CD4-positive, alpha-beta memory T cell (primary cell): ENCODE measurements at regions of chr3 and their contacts with region 1.

Region 1: DNA sequence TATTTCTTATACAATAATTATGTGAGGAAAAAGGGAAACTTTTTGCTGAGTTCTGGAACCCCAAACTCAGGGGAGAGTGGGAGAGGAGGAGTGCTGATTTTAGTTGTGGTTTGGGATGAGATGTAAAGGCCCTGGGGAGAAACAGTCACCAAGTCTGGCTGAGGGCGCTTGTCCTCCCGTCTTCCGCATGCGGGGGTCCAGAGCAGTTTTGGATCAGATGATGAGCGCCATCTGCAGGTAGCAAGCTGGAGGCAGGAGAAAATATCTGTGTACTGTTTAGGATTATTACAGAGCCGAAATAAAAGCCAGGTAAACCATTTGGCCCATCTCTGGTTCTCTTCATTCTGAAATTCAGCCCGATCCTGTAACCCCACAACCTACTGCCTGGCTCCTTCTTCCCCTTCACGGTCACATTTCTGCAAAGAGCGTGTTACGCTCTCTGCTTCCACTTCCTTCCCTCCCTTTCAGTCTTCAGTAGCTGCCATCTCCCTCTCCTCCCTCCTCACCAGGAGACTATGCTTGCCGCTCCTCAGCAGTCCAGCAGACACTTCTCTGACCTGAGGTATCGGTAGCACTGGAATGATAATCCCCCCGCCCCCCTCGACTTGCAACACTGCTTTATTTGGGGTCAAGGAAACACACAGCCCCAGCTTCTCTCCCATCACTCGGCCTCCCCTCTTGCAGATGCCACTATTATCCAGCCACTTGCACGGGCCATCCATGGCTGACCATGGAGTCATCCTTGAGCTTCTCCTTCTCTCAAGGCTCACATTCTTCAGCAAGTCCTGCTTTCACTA is 1.4 kb upstream of the PARP14 start:
- DNase-seq: peak; percentile 79 to 86 (median 79)
- H3K4me3 ChIP-seq: peak overlapping the region; percentile 81 to 89
- H3K4me3 Mint-ChIP-seq: peak overlapping the region; percentile 84 to 98 (median 96)
- H3K27ac ChIP-seq: peak overlapping the region; percentile 96
- H3K27ac Mint-ChIP-seq: peak overlapping the region; percentile 85 to 98 (median 97)
- H3K4me1 ChIP-seq: peaks cover 45% of the 10 kb centered on the region
- H3K4me1 Mint-ChIP-seq: peaks cover 38 to 61% (median 51%) of the 10 kb centered on the region in 4 donors
- H3K27me3 ChIP-seq: no peaks in the 10 kb centered on the region
- H3K27me3 Mint-ChIP-seq: no peaks in the 10 kb centered on the region

Region 2: GRCh38 chr3:121545574-121546455 is 1133.5 kb before region 1 on chr3 and contains the start of gene POLQ:
- CTCF ChIA-PET with region 1: interaction called, 16 read pairs
- POLR2A ChIA-PET with region 1: no interaction called
- intact Hi-C with region 1: loop called (anchors 1 kb)
- DNase-seq: peak; percentile 84 to 92 (median 88)
- H3K4me3 ChIP-seq: peak within 1 kb of the TSS; percentile 90 to 99
- H3K4me3 Mint-ChIP-seq: peak within 1 kb of the TSS; percentile 89 to 95 (median 92)
- H3K27ac ChIP-seq: peak within 1 kb of the TSS; percentile 64
- H3K27ac Mint-ChIP-seq: peak within 1 kb of the TSS; percentile 89 to 96 (median 92)
- H3K4me1 ChIP-seq: peaks cover 10% of the 10 kb centered on the region
- H3K4me1 Mint-ChIP-seq: peaks cover 6 to 11% (median 10%) of the 10 kb centered on the region in 4 donors
- H3K27me3 ChIP-seq: no peaks in the 10 kb centered on the region
- H3K27me3 Mint-ChIP-seq: no peaks in the 10 kb centered on the region
- total RNA-seq, gene POLQ: 0.28 to 0.35 TPM

Region 3: DNA sequence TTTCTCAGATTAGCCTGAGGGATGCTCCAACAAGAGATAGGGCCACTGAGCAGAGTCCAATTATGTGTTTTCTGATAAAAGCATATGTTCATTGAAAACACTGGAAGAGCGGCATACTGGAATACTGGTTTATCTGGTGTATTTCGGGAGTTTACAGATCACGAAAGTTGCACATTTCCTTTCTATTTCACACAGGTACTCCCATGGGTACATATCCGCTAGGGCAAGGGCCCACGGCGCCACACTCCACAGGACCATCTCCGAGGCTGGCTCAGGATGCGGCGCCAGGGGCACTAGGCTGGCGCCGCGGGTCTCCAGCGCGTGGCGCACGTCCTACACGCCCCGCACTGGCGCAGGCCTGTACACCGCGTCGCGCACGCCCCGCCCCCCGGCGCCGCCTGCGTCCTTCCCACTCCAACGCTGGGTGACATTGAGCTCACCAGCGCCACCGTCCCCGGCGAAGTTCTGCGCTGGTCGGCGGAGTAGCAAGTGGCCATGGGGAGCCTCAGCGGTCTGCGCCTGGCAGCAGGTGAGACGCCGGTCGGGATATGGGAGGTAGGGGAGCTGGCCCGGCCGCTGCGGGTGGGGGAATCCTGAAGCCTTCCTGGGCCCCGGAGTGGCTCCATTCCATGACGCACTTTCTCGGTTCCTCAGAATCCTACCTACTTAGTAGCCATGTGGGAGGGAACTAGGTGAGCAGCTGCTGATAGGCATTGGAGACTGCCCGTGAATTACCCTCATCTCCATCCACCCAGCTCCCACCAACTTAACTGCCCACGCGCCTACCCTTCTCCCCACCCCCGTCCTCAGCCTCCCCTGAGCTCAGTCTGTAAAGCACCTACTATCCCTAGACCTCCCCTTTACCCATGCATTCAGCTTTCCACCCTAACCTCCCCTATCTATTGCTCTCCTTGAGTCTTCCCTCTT is 295.2 kb before region 1 on chr3 and contains the start of gene FAM162A:
- CTCF ChIA-PET with region 1: interaction called, 13 read pairs
- POLR2A ChIA-PET with region 1: interaction called, 30 read pairs
- intact Hi-C with region 1: loop called (anchors 2 kb)
- DNase-seq: peak; percentile 92 to 93 (median 93)
- H3K4me3 ChIP-seq: peak within 1 kb of the TSS; percentile 72 to 84
- H3K4me3 Mint-ChIP-seq: peak within 1 kb of the TSS; percentile 89 to 96 (median 94)
- H3K27ac ChIP-seq: peak within 1 kb of the TSS; percentile 76
- H3K27ac Mint-ChIP-seq: peak within 1 kb of the TSS; percentile 93 to 98 (median 95)
- H3K4me1 ChIP-seq: peaks cover 31% of the 10 kb centered on the region
- H3K4me1 Mint-ChIP-seq: peaks cover 21 to 51% (median 36%) of the 10 kb centered on the region in 4 donors
- H3K27me3 ChIP-seq: no peaks in the 10 kb centered on the region
- H3K27me3 Mint-ChIP-seq: no peaks in the 10 kb centered on the region
- total RNA-seq, gene FAM162A: 31.1 to 32.8 TPM

Region 4: DNA sequence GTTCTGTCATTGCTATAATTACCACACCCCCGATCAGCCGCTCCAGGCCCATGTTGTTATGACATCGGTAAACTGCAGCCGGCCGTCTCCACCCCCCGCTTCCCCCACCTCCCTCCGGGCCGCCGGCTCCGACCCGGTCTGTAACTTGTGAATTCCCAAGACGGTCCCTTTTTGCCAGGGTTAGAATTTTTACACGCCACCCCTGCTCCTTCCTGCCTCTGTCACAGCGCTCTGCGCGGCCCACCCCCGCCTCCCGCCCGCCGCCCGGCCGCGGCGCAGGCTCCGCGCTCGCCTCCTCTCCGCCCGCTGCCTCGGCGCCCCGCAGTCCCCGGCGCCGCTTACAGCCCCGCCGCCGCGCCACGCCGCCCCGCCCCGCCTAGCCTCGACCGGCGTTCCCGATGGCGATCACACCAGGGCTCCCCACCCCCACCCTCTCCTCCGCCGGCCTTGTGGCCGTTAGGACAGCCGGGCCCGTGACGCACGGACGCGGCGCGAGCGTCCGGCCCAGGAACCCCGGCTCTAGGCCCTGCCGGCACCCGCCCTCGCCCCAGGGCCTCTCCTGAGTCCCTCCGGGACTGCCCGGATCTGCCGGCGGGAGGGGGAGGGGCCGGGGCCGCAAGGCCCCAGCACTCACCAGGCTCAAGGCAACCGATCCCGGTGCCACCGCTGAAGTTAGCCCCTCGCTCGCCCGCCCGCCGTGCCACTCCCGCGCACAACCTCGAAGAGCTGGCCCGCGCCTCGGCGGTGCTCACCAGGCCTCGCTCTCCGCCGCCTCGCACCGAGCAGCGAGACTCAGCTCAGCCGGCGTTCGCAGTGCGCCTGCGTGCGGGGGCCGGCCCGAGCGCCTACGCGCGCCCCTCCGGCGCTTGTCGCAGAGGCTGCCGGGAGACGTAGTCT is 164.9 kb before region 1 on chr3 and contains the start of gene KPNA1:
- CTCF ChIA-PET with region 1: interaction called, 4 read pairs
- POLR2A ChIA-PET with region 1: interaction called, 9 read pairs
- intact Hi-C with region 1: loop called (anchors 1 kb)
- DNase-seq: peak; percentile 86 to 92 (median 90)
- H3K4me3 ChIP-seq: peak within 1 kb of the TSS; percentile 58 to 71
- H3K4me3 Mint-ChIP-seq: peak within 1 kb of the TSS; percentile 90 to 95 (median 93)
- H3K27ac ChIP-seq: peak within 1 kb of the TSS; percentile 97
- H3K27ac Mint-ChIP-seq: peak within 1 kb of the TSS; percentile 91 to 98 (median 96)
- H3K4me1 ChIP-seq: peaks cover 30% of the 10 kb centered on the region
- H3K4me1 Mint-ChIP-seq: peaks cover 24 to 51% (median 36%) of the 10 kb centered on the region in 4 donors
- H3K27me3 ChIP-seq: no peaks in the 10 kb centered on the region
- H3K27me3 Mint-ChIP-seq: no peaks in the 10 kb centered on the region
- total RNA-seq, gene KPNA1: 67.4 to 71.5 TPM

Region 5: DNA sequence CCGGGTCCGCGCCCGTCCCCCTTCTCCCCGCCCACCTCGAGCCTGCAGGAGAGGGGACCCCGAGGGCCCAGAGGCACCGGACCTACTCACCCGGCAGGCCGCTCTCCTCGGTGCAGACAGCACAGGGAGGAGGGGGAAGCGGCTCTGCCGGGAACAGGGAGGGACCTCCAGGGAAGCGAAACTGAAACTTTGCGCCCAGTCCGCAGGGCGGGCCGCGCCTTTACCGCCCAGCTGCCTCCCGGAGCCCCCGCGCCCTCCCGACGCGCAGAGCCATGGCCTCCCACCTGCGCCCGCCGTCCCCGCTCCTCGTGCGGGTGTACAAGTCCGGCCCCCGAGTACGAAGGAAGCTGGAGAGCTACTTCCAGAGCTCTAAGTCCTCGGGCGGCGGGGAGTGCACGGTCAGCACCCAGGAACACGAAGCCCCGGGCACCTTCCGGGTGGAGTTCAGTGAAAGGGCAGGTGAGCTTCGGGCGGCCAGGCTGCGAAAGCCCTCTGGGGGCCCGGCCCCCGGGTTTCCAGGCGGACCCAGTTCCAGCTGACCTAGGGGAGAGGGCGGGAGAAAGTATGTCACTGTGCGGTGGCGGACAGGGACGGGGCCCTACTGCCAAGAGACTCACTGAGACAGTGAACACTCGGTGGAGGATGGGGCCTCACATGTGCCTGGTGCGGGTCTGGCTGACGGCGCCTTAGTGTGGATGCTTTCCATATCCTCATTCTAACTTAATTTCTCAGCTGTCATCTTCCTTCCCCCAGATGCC is 114.9 kb before region 1 on chr3 and contains the starts of genes DTX3L and PARP9:
- CTCF ChIA-PET with region 1: interaction called, 369 read pairs
- POLR2A ChIA-PET with region 1: interaction called, 113 read pairs
- intact Hi-C with region 1: loop called (anchors 1 kb)
- DNase-seq: peak; percentile 79 to 87 (median 81)
- H3K4me3 ChIP-seq: peak within 1 kb of the TSS; percentile 78 to 94
- H3K4me3 Mint-ChIP-seq: peak within 1 kb of the TSS; percentile 92 to 98 (median 96)
- H3K27ac ChIP-seq: peak within 1 kb of the TSS; percentile 95
- H3K27ac Mint-ChIP-seq: peak within 1 kb of the TSS; percentile 90 to 99 (median 97)
- H3K4me1 ChIP-seq: peaks cover 70% of the 10 kb centered on the region
- H3K4me1 Mint-ChIP-seq: peaks cover 55 to 85% (median 70%) of the 10 kb centered on the region in 4 donors
- H3K27me3 ChIP-seq: no peaks in the 10 kb centered on the region
- H3K27me3 Mint-ChIP-seq: no peaks in the 10 kb centered on the region
- total RNA-seq, gene DTX3L: 49.3 to 51.0 TPM
- total RNA-seq, gene PARP9: 24.0 to 26.0 TPM

Region 6: GRCh38 chr3:122628569-122628968 is 50.7 kb before region 1 on chr3:
- CTCF ChIA-PET with region 1: interaction called, 10 read pairs
- POLR2A ChIA-PET with region 1: no interaction called
- intact Hi-C with region 1: no loop called
- DNase-seq: no peak
- H3K4me3 ChIP-seq: no peak overlapping the region
- H3K4me3 Mint-ChIP-seq: no peak overlapping the region
- H3K27ac ChIP-seq: no peak overlapping the region
- H3K27ac Mint-ChIP-seq: peak overlapping the region in 3 of 7 donors; percentile 5 to 30 (median 5)
- H3K4me1 ChIP-seq: no peaks in the 10 kb centered on the region
- H3K4me1 Mint-ChIP-seq: no peaks in the 10 kb centered on the region
- H3K27me3 ChIP-seq: no peaks in the 10 kb centered on the region
- H3K27me3 Mint-ChIP-seq: no peaks in the 10 kb centered on the region

Region 7: DNA sequence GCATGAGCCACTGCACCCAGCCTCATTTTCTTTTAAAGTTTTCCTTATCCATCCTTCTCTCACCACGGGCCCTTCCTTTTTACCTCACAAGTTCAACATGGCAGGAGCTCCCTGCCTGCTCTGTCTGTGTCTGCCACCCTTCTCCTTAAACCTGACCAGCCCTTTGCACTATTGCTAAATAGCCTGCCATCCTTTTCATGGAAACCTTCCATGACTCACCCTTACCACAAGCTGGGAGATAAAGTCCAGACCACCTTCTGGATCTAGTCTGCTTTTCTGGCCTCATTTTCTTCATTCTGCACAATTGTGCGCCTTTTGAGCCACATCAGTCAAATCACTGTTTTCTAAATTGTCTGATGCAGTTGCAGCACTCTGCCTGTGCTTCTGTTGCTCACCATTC is 10.3 kb after region 1 on chr3:
- CTCF ChIA-PET with region 1: interaction called, 11 read pairs
- POLR2A ChIA-PET with region 1: interaction called, 4 read pairs
- intact Hi-C with region 1: no loop called
- DNase-seq: no peak
- H3K4me3 ChIP-seq: no peak overlapping the region
- H3K4me3 Mint-ChIP-seq: no peak overlapping the region
- H3K27ac ChIP-seq: no peak overlapping the region
- H3K27ac Mint-ChIP-seq: peak overlapping the region in 4 of 7 donors; percentile 38 to 90 (median 51)
- H3K4me1 ChIP-seq: peaks cover 9% of the 10 kb centered on the region
- H3K4me1 Mint-ChIP-seq: peaks cover 7 to 20% (median 17%) of the 10 kb centered on the region in 4 donors
- H3K27me3 ChIP-seq: no peaks in the 10 kb centered on the region
- H3K27me3 Mint-ChIP-seq: no peaks in the 10 kb centered on the region